ENCODE measurements at regions of chr4 and their contacts with region 1.

Region 1: GRCh38 chr4:117983541-117984365 is 50.5 kb upstream of the NDST3 start:
- DNase-seq: no peak
- H3K4me3 Mint-ChIP-seq: no peak overlapping the region
- H3K27ac Mint-ChIP-seq: no peak overlapping the region
- H3K4me1 Mint-ChIP-seq: no peaks in the 10 kb centered on the region
- H3K27me3 Mint-ChIP-seq: no peaks in the 10 kb centered on the region

Region 2: GRCh38 chr4:117302226-117302625 is 681.5 kb before region 1 on chr4:
- CTCF ChIA-PET with region 1: interaction called, 13 read pairs
- intact Hi-C with region 1: no loop called
- DNase-seq: no peak
- H3K4me3 Mint-ChIP-seq: no peak overlapping the region
- H3K27ac Mint-ChIP-seq: no peak overlapping the region
- H3K4me1 Mint-ChIP-seq: no peaks in the 10 kb centered on the region
- H3K27me3 Mint-ChIP-seq: no peaks in the 10 kb centered on the region